Mammary epithelial cell (primary cell): ENCODE measurements at regions of chr5 and their contacts with region 1.

Region 1: GRCh38 chr5:128201065-128201926 is 117.7 kb downstream of the SLC12A2 start:
- DNase-seq: peak; percentile 64
- H3K4me3 ChIP-seq: no peak overlapping the region
- H3K27ac ChIP-seq: no peak overlapping the region
- H3K4me1 ChIP-seq: peaks cover 10% of the 10 kb centered on the region
- H3K27me3 ChIP-seq: no peaks in the 10 kb centered on the region
- CTCF ChIP-seq: peak; percentile 62 to 87

Region 2: DNA sequence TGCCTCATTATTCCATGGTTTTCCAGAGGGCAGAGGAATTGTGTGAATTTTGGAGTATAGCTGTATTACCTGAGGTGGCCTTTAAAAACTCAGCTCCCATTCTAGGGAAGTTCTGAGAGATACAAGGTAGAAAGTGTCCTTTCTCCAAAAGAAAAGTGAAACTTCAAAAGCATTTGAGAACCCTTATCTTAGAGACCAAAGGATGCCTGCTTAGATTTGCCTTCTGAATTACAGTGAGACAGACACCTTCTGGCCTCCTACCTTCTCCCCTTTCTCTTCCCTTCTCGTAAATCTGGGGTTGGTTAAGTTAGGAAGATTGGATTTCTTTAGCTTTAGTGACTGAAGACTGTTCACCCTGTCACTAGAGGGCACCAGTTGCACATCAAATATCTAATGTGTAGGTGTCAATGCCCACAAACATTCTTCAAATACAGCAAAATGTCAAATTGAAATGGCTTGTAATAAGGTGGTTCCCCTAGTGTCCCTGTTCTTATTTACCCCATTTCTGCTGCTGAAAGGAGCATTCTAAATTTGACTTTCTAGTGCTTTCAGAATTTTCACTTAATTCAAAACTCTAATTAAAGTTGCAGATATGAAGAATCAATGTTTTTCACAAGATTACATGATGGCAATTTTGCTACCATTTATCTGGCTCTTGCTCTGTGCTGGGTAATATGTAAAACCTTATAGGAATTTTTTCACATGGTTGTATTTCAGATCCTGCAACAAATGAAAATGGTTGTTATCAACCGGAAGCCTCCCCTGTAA is 637.1 kb before region 1 on chr5:
- CTCF ChIA-PET with region 1: no interaction called
- dilution Hi-C with region 1: no loop called
- in situ Hi-C with region 1: loop called (anchors 10 kb)
- intact Hi-C with region 1: loop called (anchors 5 kb)
- DNase-seq: peak; percentile 44
- H3K4me3 ChIP-seq: no peak overlapping the region
- H3K27ac ChIP-seq: no peak overlapping the region
- H3K4me1 ChIP-seq: no peaks in the 10 kb centered on the region
- H3K27me3 ChIP-seq: no peaks in the 10 kb centered on the region
- CTCF ChIP-seq: peak; percentile 62 to 73

Region 3: GRCh38 chr5:127757576-127757975 is 443.7 kb before region 1 on chr5:
- CTCF ChIA-PET with region 1: no interaction called
- dilution Hi-C with region 1: no loop called
- in situ Hi-C with region 1: loop called (anchors 5 to 10 kb)
- intact Hi-C with region 1: loop called (anchors 1 kb)
- DNase-seq: peak; percentile 53
- H3K4me3 ChIP-seq: no peak overlapping the region
- H3K27ac ChIP-seq: no peak overlapping the region
- H3K4me1 ChIP-seq: no peaks in the 10 kb centered on the region
- H3K27me3 ChIP-seq: peaks cover 2% of the 10 kb centered on the region
- CTCF ChIP-seq: peak; percentile 43 to 73

Region 4: GRCh38 chr5:127875235-127876021 is 325.9 kb before region 1 on chr5:
- CTCF ChIA-PET with region 1: interaction called, 19 read pairs
- dilution Hi-C with region 1: no loop called
- in situ Hi-C with region 1: loop called in 1 of 2 experiments (anchors 10 kb)
- intact Hi-C with region 1: loop called (anchors 1 kb)
- DNase-seq: peak; percentile 51
- H3K4me3 ChIP-seq: no peak overlapping the region
- H3K27ac ChIP-seq: no peak overlapping the region
- H3K4me1 ChIP-seq: peaks cover 18% of the 10 kb centered on the region
- H3K27me3 ChIP-seq: no peaks in the 10 kb centered on the region
- CTCF ChIP-seq: peak; percentile 10 to 18

Region 5: DNA sequence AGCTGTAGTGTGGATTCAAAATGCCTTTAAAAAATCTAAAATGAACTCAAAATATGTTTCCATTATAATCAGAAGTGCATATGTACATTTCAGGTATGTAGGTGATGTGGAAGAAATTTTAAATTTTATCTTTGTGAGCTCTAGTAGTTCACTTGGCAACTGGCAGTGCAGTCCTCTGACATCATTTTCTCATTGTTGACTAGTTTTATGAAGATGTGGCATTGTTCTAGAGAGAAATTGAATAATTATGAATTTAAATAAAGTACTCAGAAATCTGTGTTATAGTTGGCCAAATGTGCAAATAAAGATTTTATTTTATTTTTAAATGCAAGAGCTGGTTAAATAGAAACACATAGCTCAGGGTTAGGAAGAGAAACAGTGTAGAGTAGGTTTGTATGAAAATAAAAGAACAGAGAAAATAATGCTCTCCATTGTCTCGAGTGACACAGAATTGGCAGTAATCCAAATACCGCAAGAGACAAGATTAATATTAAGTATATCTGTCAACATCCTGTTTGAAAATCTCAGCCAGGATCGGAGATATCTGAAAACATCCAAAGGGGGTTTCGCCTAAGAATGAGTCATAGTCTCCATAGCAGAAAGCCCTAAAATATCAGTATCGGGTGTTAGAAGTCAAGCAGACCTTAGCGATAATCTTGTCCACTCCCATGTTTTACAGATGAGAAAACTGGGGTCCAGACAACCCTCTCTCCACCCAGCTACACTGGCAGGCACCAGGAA is 308.7 kb before region 1 on chr5:
- CTCF ChIA-PET with region 1: no interaction called
- dilution Hi-C with region 1: no loop called
- in situ Hi-C with region 1: no loop called
- intact Hi-C with region 1: no loop called
- DNase-seq: peak; percentile 89
- H3K4me3 ChIP-seq: peak overlapping the region in 1 of 3 experiments; percentile 39
- H3K27ac ChIP-seq: peak overlapping the region; percentile 79
- H3K4me1 ChIP-seq: peaks cover 21% of the 10 kb centered on the region
- H3K27me3 ChIP-seq: no peaks in the 10 kb centered on the region
- CTCF ChIP-seq: no peak

Region 6: DNA sequence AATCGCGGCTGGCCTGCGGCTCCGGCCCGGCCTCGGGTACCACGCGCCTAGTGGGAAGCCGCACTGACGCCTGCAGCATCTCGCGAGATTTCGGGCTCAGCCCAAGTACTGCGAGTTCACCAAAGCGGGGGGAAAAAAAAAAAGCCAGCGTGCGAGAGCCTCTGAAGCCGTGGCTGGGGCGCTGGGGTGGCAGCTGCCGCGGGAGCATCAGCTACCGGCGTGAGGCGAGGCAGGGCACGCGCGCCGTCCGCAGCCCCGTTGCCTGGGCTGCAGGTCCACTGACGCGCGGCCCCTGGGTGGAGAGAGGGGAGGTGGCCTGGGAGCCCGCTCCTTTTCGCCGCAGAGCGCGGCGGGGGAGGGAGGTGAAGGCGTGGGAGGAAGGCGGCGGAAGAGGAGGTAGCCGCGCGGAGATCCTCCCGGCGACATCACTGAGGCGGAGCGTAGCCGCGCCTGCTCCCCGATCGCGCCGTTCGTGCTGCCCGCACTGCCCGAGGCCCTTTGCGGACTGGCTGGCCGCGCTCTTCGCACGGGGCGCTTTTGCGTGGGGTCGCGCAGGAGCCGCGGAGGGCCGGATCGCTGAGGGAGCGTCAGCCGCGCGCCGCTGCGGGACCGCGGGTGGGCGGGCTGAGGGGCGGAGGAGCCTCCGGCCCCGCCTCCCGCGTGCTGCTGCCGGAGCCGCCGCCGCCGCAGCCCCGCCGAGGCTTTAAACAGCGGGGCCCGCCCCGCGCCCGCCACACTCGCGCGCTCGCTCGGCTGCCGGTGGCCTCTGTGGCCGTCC is 118.1 kb before region 1 on chr5 and contains the start of gene SLC12A2:
- CTCF ChIA-PET with region 1: no interaction called
- dilution Hi-C with region 1: no loop called
- in situ Hi-C with region 1: no loop called
- intact Hi-C with region 1: loop called (anchors 2 kb)
- DNase-seq: peak; percentile 94
- H3K4me3 ChIP-seq: peak within 1 kb of the TSS; percentile 69 to 93 (median 88)
- H3K27ac ChIP-seq: peak within 1 kb of the TSS; percentile 89
- H3K4me1 ChIP-seq: peaks cover 13% of the 10 kb centered on the region
- H3K27me3 ChIP-seq: no peaks in the 10 kb centered on the region
- CTCF ChIP-seq: no peak
- total RNA-seq, gene SLC12A2: 24.1 to 50.3 TPM

Region 7: DNA sequence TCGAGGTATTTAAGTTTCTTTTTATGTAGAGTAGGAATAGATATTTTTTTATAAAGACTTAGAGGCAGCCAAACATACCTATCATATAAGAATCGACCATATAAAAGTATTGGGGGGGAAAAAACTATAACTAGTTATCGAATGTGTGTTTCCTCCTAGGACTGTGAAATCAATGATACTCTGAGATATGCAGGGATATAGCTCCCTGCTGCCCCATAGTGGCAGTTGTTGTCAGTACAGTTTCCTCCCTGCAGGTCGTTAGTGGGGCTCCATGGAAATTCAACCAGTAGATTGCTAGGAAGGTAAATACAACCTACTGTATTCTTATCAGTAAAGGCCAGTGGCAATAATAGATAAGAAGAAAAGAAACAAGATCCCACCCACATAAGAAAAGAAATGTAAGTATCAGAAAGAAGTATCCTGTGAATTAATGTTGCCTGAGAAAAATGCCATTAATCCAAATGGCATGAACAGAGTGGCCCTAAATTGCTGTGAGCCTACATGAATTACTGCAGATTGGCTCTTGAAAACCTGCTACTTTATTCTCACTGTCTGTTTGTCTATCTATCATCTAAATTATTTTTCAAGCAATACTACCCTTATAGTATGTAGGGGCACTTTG is 473.6 kb after region 1 on chr5:
- CTCF ChIA-PET with region 1: no interaction called
- dilution Hi-C with region 1: no loop called
- in situ Hi-C with region 1: loop called in 1 of 2 experiments (anchors 25 kb)
- intact Hi-C with region 1: no loop called
- DNase-seq: peak; percentile 43
- H3K4me3 ChIP-seq: no peak overlapping the region
- H3K27ac ChIP-seq: no peak overlapping the region
- H3K4me1 ChIP-seq: no peaks in the 10 kb centered on the region
- H3K27me3 ChIP-seq: no peaks in the 10 kb centered on the region
- CTCF ChIP-seq: peak; percentile 87